Panc1 (cell line): ENCODE measurements at regions of chr2 and their contacts with region 1.

Region 1: GRCh38 chr2:104033399-104033798 is 820.5 kb upstream of the POU3F3 start:
- DNase-seq: peak; percentile 12
- ATAC-seq: no peak
- H3K4me3 ChIP-seq: no peak overlapping the region
- H3K27ac ChIP-seq: no peak overlapping the region
- H3K4me1 ChIP-seq: no peaks in the 10 kb centered on the region
- H3K27me3 ChIP-seq: no peaks in the 10 kb centered on the region
- CTCF ChIP-seq: peak; percentile 53; the same call in 1 of the 2 replicates

Region 2: GRCh38 chr2:104388296-104388695 is 354.9 kb after region 1 on chr2:
- CTCF ChIA-PET with region 1: no interaction called
- POLR2A ChIA-PET with region 1: no interaction called
- in situ Hi-C with region 1: no loop called
- intact Hi-C with region 1: loop called (anchors 10 kb)
- DNase-seq: no peak
- ATAC-seq: no peak
- H3K4me3 ChIP-seq: no peak overlapping the region
- H3K27ac ChIP-seq: no peak overlapping the region
- H3K4me1 ChIP-seq: no peaks in the 10 kb centered on the region
- H3K27me3 ChIP-seq: no peaks in the 10 kb centered on the region
- CTCF ChIP-seq: no peak